ENCODE measurements at regions of chr1 and their contacts with region 1.

Region 1: DNA sequence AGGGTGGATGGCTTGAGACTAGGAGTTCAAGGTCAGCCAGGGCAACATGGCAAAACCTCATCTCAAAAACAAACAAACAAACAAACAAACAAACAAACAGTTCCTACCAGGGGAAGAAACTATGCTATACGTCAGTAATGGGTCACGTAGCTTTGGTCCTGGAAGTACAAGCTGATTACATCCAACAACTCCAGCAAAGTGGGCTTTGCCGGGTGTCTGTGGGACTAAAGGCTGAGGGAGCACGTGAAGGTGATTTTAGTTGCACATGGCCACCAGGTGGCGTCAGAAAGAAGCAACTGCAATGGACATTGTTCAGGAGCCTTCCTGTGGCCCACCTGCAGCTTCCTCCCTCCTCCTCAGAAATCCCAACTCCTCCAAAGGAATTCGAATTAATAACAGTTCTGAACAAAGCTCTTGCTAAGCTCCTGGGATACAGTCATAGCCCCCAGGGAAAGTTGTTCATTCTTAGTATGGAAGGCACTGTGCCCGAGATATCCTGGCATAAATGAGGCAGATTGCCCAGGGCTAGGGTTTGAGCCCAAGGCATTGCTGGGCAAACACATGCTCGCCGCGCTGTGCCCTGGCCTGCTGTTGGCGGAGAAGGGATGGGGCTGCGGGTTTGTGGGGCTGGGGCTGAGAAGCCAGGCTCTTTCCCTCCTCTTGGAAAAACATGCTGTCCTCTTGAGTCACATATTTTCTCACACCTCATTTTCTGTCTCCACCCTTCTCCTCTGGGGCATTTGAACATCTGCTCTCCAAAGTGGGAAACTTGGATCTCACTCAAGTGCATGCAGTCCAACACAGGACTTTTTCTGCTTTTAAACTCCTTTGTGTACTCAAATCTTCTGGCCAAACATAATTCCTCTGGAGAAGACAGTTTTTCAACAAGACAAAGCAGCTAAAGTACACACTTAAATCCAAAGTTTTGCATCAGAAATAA is 28.6 kb downstream of the AKNAD1 start:
- H3K4me3 ChIP-seq: no peak overlapping the region
- H3K27ac ChIP-seq: no peak overlapping the region
- H3K4me1 ChIP-seq: no peaks in the 10 kb centered on the region
- CTCF ChIP-seq: peak; percentile 71

Region 2: DNA sequence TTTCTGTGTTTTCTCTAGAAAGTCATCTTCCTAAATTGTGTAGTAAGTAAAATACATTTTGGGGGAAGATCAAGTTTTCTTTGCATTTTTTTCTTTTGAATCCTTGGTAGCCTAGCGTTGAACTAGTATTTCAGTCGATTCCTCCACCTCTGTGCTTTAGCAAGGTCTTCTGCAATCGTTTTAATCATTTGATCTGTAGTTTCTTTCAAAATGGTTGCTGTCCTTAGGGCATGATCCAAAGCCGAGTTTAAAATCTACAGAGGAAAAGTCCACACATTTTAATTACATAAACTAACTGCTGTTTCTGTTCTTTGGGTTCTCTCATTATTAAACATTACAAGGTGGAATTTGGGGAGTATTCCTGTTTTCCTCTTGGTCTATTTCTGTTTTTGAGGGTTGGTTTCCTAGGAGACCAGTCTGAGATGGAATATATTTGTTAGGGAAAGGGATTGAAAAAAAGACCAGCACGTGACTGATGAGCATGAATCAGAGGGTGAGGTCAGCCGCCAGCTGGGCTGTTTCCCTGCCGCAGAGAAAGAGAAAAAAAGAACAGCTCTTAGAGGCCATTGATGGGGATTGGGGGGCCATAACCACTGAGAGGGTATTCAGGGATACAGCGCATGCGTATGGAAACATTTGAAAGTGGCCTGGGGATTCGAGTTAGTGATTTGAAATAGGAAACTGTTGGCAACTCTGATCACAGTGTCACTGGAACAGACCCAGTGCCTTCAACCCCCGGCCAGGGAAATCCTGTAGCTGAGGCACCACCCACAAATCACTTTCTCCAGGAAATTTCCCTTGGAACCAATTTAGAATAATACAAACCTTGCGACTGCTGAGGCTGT is 12.0 kb before region 1 on chr1:
- CTCF ChIA-PET with region 1: interaction called, 35 read pairs
- POLR2A ChIA-PET with region 1: no interaction called
- H3K4me3 ChIP-seq: peak overlapping the region; percentile 0; the same call in 1 of the 2 replicates
- H3K27ac ChIP-seq: no peak overlapping the region
- H3K4me1 ChIP-seq: no peaks in the 10 kb centered on the region
- CTCF ChIP-seq: no peak

Region 3: DNA sequence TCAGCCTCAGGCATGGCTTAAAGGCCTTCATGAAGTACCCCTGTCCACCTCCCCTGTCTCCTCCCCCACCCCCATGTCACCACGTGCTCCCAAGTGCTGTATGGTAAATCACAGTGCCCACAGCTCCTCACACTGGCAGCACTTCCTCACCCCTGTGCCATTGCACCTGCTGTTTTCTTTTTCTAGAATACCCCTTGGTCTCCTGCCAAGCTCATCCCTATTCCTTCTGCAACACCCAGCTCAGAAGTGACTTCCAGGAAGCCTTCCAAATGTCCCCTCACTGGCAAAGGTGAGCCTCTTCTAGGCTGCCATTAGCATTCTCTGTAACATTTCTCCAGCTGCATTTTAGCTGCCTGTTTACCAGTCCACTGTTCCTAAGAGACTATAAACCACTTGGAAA is 19.2 kb after region 1 on chr1:
- CTCF ChIA-PET with region 1: interaction called, 30 read pairs
- POLR2A ChIA-PET with region 1: no interaction called
- H3K4me3 ChIP-seq: no peak overlapping the region
- H3K27ac ChIP-seq: no peak overlapping the region
- H3K4me1 ChIP-seq: no peaks in the 10 kb centered on the region
- CTCF ChIP-seq: no peak

Region 4: GRCh38 chr1:108858240-108858950 is 30.1 kb after region 1 on chr1:
- CTCF ChIA-PET with region 1: interaction called, 15 read pairs
- POLR2A ChIA-PET with region 1: no interaction called
- H3K4me3 ChIP-seq: no peak overlapping the region
- H3K27ac ChIP-seq: no peak overlapping the region
- H3K4me1 ChIP-seq: no peaks in the 10 kb centered on the region
- CTCF ChIP-seq: no peak

Region 5: GRCh38 chr1:108865038-108865910 is 37.0 kb after region 1 on chr1:
- CTCF ChIA-PET with region 1: interaction called, 12 read pairs
- POLR2A ChIA-PET with region 1: no interaction called
- H3K4me3 ChIP-seq: no peak overlapping the region
- H3K27ac ChIP-seq: no peak overlapping the region
- H3K4me1 ChIP-seq: no peaks in the 10 kb centered on the region
- CTCF ChIP-seq: no peak

Region 6: DNA sequence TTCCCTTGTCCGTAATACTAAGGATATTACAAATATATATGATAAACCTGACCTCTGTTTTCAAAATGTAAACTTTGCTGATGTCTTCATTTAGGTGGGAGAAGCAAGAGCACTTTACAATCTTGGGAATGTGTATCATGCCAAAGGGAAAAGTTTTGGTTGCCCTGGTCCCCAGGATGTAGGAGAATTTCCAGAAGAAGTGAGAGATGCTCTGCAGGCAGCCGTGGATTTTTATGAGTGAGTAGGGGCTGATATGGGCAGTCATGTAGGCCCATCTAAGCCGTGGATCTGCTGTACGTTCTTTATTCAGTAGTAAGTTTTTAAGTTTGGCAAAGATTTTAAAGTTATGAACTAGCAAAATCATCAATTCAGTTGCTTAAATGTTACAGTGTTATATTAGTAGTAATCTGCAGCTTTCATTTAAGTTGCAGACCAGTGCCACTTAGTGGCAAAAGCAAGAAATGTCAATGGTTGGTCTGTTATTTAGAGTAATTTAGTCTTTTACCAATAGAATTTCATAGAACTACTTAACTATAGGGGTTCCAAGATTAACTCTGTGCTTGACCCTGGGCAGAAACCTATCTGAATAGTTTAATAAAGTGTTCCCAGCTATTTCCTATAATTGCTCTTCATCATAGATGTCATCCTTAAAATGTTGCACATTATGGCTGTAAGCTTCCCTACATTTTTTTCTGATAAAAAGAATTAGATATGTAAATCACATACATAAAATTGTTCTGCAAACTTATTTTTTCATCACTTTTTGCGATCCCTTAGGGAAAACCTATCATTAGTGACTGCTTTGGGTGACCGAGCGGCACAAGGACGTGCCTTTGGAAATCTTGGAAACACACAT is 69.8 kb after region 1 on chr1:
- CTCF ChIA-PET with region 1: interaction called, 199 read pairs
- POLR2A ChIA-PET with region 1: interaction called, 3 read pairs
- H3K4me3 ChIP-seq: no peak overlapping the region
- H3K27ac ChIP-seq: no peak overlapping the region
- H3K4me1 ChIP-seq: no peaks in the 10 kb centered on the region
- CTCF ChIP-seq: peak; percentile 48; the same call in 1 of the 2 replicates

Measured in HEK293 (cell line).